GM12878 (cell line): ENCODE measurements at regions of chr2 and their contacts with region 1.

Region 1: GRCh38 chr2:39094852-39095306 is 26.0 kb downstream of the SOS1 start:
- DNase-seq: peak; percentile 71
- ATAC-seq: peak; percentile 76
- H3K4me3 ChIP-seq: peak overlapping the region; percentile 22; the same call in 1 of the 2 replicates
- H3K27ac ChIP-seq: peak overlapping the region; percentile 77
- H3K4me1 ChIP-seq: peaks cover 38% of the 10 kb centered on the region
- H3K27me3 ChIP-seq: no peaks in the 10 kb centered on the region
- CTCF ChIP-seq: no peak
- EP300 ChIP-seq: 0 out of 4 replicates have a peak, but pooled peaks of 1 of the 2 experiments have one; percentile 30
- POLR2A ChIP-seq: no peak
- RAD21 ChIP-seq: no peak

Region 2: DNA sequence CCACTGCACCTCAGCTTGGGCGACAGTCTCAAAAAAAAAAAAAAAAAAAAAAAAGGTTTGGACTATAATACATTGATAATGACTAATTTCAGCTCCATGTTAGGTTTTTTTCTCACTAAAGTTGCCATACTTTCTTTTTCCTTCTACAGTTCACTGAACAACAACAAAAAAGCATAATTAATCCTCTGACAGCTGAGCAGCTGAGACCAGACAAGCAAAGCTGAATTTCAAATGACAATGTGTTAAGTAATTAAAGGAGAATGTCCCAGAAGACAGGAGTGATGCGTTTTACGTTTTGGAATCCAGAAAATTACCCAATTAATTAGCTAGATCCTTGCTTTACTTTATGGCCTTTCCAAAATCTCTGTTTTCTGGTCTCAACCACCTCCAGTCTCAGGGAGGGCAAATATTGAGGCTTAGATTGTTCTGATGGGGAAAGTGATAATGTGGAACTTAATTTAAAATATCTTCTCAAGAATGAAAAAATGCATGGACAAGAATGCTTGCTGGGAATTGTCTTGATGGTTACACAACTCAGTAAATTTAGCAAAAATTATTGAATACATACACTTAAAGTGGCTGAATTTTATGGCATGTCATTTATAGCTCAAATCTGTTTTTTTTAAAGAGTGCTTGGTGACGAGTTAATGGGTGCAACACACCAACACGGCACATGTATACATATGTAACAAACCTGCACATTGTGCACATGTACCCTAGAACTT is 1187.2 kb before region 1 on chr2:
- CTCF ChIA-PET with region 1: no interaction called
- POLR2A ChIA-PET with region 1: interaction called, 10 read pairs
- RAD21 ChIA-PET with region 1: no interaction called
- SMC1A ChIA-PET with region 1: no interaction called
- in situ Hi-C with region 1: no loop called
- intact Hi-C with region 1: no loop called
- DNase-seq: no peak
- ATAC-seq: 0 out of 3 replicates have a peak, but pooled peaks have one; percentile 17
- H3K4me3 ChIP-seq: no peak overlapping the region
- H3K27ac ChIP-seq: no peak overlapping the region
- H3K4me1 ChIP-seq: no peaks in the 10 kb centered on the region
- H3K27me3 ChIP-seq: no peaks in the 10 kb centered on the region
- CTCF ChIP-seq: no peak
- EP300 ChIP-seq: no peak
- POLR2A ChIP-seq: no peak
- RAD21 ChIP-seq: no peak

Region 3: DNA sequence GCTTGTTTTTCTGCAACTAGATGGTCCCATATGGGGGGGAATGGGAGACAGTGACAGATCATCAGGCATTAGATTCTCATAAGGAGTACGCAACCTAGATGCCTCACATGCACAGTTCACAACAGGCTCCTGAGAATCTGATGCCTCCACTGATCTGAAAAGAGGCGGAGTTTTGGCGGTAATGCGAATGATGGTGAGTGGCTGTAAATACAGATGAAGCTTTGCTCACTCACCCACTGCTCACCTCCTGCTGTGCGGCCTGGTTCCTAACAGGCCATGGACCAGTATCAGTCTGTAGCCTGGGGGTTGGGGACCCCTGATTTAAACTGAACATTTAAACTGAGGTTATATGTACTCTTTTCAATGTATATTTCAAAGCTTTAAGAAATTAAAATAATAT is 14.7 kb before region 1 on chr2:
- CTCF ChIA-PET with region 1: no interaction called
- POLR2A ChIA-PET with region 1: no interaction called
- RAD21 ChIA-PET with region 1: no interaction called
- SMC1A ChIA-PET with region 1: interaction called, 10 read pairs
- in situ Hi-C with region 1: no loop called
- intact Hi-C with region 1: no loop called
- DNase-seq: no peak
- ATAC-seq: no peak
- H3K4me3 ChIP-seq: no peak overlapping the region
- H3K27ac ChIP-seq: no peak overlapping the region
- H3K4me1 ChIP-seq: no peaks in the 10 kb centered on the region
- H3K27me3 ChIP-seq: no peaks in the 10 kb centered on the region
- CTCF ChIP-seq: no peak
- EP300 ChIP-seq: no peak
- POLR2A ChIP-seq: no peak
- RAD21 ChIP-seq: no peak

Region 4: DNA sequence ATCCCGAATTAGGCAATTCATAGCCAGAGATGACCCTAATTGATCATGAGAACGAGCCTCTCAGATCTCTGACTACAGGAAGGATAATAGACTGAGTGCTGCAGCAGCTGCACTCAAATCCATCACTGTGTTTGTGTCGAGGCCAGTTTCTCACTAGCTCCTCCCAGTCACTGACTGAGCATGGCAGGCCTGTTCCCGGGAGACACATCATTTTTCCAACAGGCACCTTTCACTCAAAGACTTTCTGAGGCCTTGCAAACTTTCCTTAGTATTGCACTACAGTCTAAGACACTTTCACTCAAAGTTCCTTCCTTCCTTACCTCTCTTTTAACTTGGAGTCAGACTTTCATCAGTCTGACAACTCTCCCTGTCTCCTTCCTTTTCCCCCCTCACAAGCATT is 12.3 kb after region 1 on chr2:
- CTCF ChIA-PET with region 1: interaction called, 5 read pairs
- POLR2A ChIA-PET with region 1: interaction called, 8 read pairs
- RAD21 ChIA-PET with region 1: interaction called, 5 read pairs
- SMC1A ChIA-PET with region 1: interaction called, 15 read pairs
- in situ Hi-C with region 1: no loop called
- intact Hi-C with region 1: no loop called
- DNase-seq: no peak
- ATAC-seq: 0 out of 3 replicates have a peak, but pooled peaks have one; percentile 30
- H3K4me3 ChIP-seq: no peak overlapping the region
- H3K27ac ChIP-seq: no peak overlapping the region
- H3K4me1 ChIP-seq: peaks cover 9% of the 10 kb centered on the region; the same call in 1 of the 2 replicates
- H3K27me3 ChIP-seq: no peaks in the 10 kb centered on the region
- CTCF ChIP-seq: no peak
- EP300 ChIP-seq: no peak
- POLR2A ChIP-seq: no peak
- RAD21 ChIP-seq: no peak